SK-N-SH (cell line): ENCODE measurements at regions of chr7 and their contacts with region 1.

Region 1: GRCh38 chr7:150962553-150963399 is 15.3 kb downstream of the KCNH2 start:
- DNase-seq: peak; percentile 94
- H3K4me3 ChIP-seq: peak overlapping the region in 1 of 2 experiments; percentile 48; a peak in 1 of 4 replicates
- H3K27ac ChIP-seq: peak overlapping the region in 1 of 2 experiments; percentile 97; a peak in 2 of 4 replicates
- H3K4me1 ChIP-seq: peaks cover 0 to 89% of the 10 kb centered on the region in 2 experiments; a peak in 2 of 4 replicates
- H3K27me3 ChIP-seq: peaks cover 16% of the 10 kb centered on the region
- CTCF ChIP-seq: peak; percentile 95
- EP300 ChIP-seq: peak in 1 of 2 experiments; percentile 39; a peak in 1 of 4 replicates
- RAD21 ChIP-seq: peak; percentile 94

Region 2: DNA sequence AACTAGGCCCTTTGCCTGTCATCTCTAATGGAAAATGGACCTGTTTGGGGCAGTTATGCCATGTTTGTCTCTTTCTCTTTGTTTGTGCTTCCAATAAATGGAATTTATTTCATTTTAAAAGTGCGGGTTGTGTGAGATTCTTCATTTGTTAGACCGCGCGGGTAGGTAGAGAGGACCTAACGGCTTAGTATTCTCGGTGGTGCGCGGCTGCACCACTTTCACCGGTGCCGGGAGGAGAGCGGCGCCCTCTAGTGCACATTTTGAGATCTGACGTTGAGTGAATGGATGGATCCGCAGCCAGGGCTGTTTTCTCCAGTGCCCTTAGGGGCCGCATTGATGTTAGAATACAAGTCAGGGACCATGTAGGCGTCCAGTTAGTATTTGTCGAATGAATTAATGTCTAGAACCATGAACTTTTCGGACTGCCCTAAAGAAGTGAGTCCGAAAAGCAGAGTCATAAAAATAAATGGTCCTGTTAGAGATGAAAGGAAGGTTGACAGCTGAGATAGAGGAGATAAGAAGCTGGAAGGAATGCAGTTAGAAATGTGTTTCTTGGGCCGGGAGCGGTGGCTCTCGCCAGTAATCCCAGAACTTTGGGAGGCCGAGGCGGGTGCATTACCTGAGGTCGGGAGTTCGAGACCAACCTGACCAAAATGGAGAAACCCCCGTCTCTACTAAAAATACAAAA is 541.6 kb before region 1 on chr7:
- CTCF ChIA-PET with region 1: no interaction called
- POLR2A ChIA-PET with region 1: no interaction called
- DNase-seq: peak; percentile 92
- H3K4me3 ChIP-seq: peak overlapping the region in 1 of 2 experiments; percentile 33; a peak in 1 of 4 replicates
- H3K27ac ChIP-seq: no peak overlapping the region
- H3K4me1 ChIP-seq: no peaks in the 10 kb centered on the region
- H3K27me3 ChIP-seq: no peaks in the 10 kb centered on the region
- CTCF ChIP-seq: peak; percentile 99
- EP300 ChIP-seq: no peak
- RAD21 ChIP-seq: peak; percentile 95

Region 3: GRCh38 chr7:150876817-150877526 is 85.8 kb before region 1 on chr7:
- CTCF ChIA-PET with region 1: interaction called, 15 read pairs
- POLR2A ChIA-PET with region 1: no interaction called
- DNase-seq: peak; percentile 91
- H3K4me3 ChIP-seq: no peak overlapping the region
- H3K27ac ChIP-seq: peak overlapping the region in 1 of 2 experiments; percentile 60; a peak in 2 of 4 replicates
- H3K4me1 ChIP-seq: peaks cover 5% of the 10 kb centered on the region in 2 experiments; a peak in 2 of 4 replicates
- H3K27me3 ChIP-seq: no peaks in the 10 kb centered on the region
- CTCF ChIP-seq: peak; percentile 58
- EP300 ChIP-seq: no peak
- RAD21 ChIP-seq: peak; percentile 69

Region 4: DNA sequence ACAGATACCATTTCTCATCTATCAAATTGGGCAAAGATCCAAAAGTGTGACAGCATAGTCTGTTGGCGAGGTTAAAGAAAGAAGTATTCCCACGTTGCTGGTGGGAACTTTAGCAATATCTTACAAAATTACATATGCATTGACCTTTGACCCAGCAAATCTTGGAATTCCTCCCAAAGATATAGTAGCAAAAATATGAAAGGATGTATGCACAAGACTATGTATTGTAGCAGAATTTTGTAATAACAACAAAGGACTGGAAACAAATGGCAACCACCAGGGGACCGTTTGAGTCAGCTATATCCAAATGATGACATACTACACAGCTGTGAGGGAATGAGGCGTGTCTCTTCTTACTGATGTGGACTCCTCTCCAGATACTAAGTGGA is 34.8 kb before region 1 on chr7:
- CTCF ChIA-PET with region 1: interaction called, 86 read pairs
- POLR2A ChIA-PET with region 1: no interaction called
- DNase-seq: no peak
- H3K4me3 ChIP-seq: no peak overlapping the region
- H3K27ac ChIP-seq: no peak overlapping the region
- H3K4me1 ChIP-seq: peaks cover 0 to 16% of the 10 kb centered on the region in 2 experiments; a peak in 2 of 4 replicates
- H3K27me3 ChIP-seq: 0 out of 2 replicates have a peak, but pooled peaks cover 14% of the 10 kb centered on the region
- CTCF ChIP-seq: no peak
- EP300 ChIP-seq: no peak
- RAD21 ChIP-seq: no peak

Region 5: DNA sequence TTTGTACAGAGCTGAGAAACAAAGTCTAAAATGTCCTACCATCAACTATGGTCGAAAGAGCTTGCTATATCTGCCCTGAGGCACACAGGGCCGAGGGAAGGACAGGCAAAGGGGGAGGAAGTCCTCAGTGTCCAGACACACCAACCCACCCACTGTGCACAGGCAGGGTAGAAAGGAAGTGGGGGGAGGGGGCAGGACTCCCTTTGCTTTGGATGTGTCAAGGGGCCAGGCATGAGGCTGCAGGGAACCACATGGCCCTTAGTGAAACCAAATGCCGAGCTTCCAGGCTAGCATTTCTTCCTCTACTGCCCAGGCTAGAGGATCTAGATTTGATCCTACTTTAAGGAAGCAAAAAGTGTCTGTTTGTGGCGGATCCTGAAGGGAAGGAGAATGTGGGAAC is 13.2 kb before region 1 on chr7:
- CTCF ChIA-PET with region 1: interaction called, 49 read pairs
- POLR2A ChIA-PET with region 1: interaction called, 14 read pairs
- DNase-seq: peak; percentile 88
- H3K4me3 ChIP-seq: no peak overlapping the region
- H3K27ac ChIP-seq: peak overlapping the region in 1 of 2 experiments; percentile 89; a peak in 2 of 4 replicates
- H3K4me1 ChIP-seq: peaks cover 0 to 92% of the 10 kb centered on the region in 2 experiments; a peak in 2 of 4 replicates
- H3K27me3 ChIP-seq: peaks cover 6% of the 10 kb centered on the region; the same call in 1 of the 2 replicates
- CTCF ChIP-seq: no peak
- EP300 ChIP-seq: peak in 1 of 2 experiments; percentile 65; a peak in 1 of 4 replicates
- RAD21 ChIP-seq: peak; percentile 20

Region 6: GRCh38 chr7:151008511-151009323 is 45.9 kb after region 1 on chr7:
- CTCF ChIA-PET with region 1: interaction called, 48 read pairs
- POLR2A ChIA-PET with region 1: interaction called, 3 read pairs
- DNase-seq: peak; percentile 80
- H3K4me3 ChIP-seq: peak overlapping the region in 1 of 2 experiments; percentile 31; a peak in 1 of 4 replicates
- H3K27ac ChIP-seq: no peak overlapping the region
- H3K4me1 ChIP-seq: peaks cover 0 to 24% of the 10 kb centered on the region in 2 experiments; a peak in 1 of 4 replicates
- H3K27me3 ChIP-seq: 0 out of 2 replicates have a peak, but pooled peaks cover 5% of the 10 kb centered on the region
- CTCF ChIP-seq: peak; percentile 59
- EP300 ChIP-seq: no peak
- RAD21 ChIP-seq: no peak

Region 7: DNA sequence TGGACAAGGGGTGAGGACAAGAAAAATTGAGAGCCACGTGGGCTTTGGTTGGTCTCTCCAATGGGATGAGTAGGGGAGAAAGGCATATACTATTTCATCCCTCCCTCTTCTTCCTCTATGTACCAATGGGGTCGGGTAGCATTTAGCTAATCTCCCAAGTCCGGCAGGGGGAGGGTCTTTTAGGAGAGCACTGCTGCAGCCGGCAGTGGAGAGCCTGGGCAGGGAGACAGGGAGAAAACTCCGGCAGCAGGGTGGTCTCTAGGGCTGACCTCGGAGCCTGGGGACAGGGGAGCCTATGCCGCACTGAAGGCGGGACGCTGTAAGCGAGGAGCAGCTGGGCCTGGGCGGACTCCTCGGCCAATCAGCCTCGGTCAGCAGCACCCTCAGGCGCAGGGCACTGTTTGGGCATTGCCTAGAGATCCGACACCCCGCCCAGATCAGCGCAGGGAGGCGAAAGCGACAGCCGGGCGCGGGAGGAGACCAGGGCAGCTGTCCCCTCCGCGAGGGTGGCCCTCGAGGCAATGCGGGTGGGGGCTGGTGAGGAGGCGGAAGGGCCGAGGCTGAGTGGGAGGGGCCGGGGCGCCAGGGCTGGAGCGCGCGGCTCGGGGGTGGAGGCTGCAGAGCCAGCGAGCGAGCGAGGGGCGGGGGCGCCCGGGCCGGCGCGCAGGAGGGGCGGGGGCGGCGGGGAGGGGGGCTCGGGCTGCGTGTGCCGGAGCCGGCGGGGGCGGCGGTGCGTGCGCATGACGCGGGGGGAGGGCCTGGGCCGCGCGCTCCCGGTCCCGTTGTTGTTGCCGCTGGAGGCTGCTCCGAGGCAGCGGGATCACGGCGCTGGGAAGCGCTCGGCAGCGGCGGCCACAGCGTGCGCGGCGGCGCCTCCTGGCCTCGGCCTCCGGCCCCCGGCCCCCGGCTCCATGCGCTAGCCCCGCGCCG is 123.2 kb after region 1 on chr7 and contains the start of gene AGAP3:
- CTCF ChIA-PET with region 1: no interaction called
- POLR2A ChIA-PET with region 1: no interaction called
- DNase-seq: peak; percentile 99
- H3K4me3 ChIP-seq: peak within 1 kb of the TSS; percentile 90 to 100
- H3K27ac ChIP-seq: peak within 1 kb of the TSS; percentile 64 to 94
- H3K4me1 ChIP-seq: peaks cover 34 to 58% of the 10 kb centered on the region in 2 experiments
- H3K27me3 ChIP-seq: no peaks in the 10 kb centered on the region
- CTCF ChIP-seq: no peak
- EP300 ChIP-seq: peak in 1 of 2 experiments; percentile 25; a peak in 1 of 4 replicates
- RAD21 ChIP-seq: no peak
- polyA plus RNA-seq, gene AGAP3: 108 and 126 TPM in 2 replicates

Region 8: DNA sequence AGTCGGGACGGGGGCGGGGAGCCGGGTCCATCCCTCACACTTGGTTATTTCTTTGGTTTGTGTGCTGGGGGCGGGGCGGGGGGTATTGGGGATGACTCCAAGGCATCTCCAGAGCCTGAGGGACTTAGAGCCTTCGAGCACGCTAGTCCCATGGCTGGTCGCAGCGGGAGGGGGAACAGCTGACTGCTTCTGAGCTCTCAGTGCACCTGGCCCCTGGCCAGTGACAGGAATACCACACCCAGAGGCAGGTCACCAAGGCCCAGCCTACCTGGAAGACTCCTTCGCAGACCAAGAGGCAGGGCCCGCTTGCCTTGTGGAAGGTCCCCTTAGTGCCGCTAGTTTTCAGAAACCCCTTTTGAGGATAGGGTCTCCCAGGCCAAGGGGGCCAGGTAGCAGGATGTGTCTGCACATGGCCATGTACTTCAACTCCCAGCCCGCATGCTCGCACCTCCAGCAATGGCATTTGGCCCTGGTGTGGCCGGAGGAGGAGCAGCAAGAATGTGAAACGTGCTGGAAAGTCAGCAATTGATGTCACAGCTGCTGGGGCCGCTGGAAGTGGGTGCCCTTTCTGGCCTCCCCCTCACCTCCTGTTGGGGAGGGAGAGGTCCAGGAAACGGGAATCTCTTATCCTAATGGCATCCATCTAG is 163.8 kb after region 1 on chr7:
- CTCF ChIA-PET with region 1: no interaction called
- POLR2A ChIA-PET with region 1: no interaction called
- DNase-seq: no peak
- H3K4me3 ChIP-seq: no peak overlapping the region
- H3K27ac ChIP-seq: no peak overlapping the region
- H3K4me1 ChIP-seq: peaks cover 0 to 19% of the 10 kb centered on the region in 2 experiments; a peak in 1 of 4 replicates
- H3K27me3 ChIP-seq: no peaks in the 10 kb centered on the region
- CTCF ChIP-seq: no peak
- EP300 ChIP-seq: no peak
- RAD21 ChIP-seq: no peak